ENCODE measurements at regions of chr15 and their contacts with region 1.

Region 1: GRCh38 chr15:34038023-34038870 is 757 bp downstream of the AVEN start:
- DNase-seq: peak; percentile 84
- H3K4me3 ChIP-seq: peak overlapping the region; percentile 81
- H3K27ac ChIP-seq: peak overlapping the region; percentile 58
- H3K4me1 ChIP-seq: peaks cover 21% of the 10 kb centered on the region
- CTCF ChIP-seq: no peak

Region 2: DNA sequence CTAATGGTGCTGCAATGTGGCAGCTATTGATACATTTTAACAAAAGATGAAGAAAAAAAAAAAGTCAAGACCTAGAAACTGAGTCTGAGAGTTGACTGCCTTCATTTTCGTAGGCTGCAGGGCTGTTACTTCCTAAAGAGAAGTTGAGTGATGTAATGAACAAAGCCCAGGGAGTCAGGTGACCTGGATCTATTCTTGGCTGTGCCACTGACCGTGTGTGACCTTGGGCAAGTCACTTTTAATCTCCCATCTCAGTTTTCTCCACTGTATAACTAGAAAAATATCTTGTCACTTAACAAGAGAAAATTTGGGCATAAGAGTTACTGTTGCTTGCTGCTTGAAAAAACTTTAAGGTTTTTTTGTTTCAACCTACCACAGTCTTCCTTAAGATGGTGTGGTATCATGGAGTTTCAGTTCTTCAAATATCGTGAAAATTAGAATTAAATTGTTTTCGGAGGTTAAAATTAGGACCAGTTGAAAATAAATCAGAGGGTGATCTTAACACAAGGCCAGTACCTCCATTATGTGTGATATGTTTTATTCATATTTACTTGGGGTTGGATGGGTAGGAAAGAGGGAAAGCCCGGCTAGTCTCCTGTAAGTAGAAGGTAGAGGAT is 849.5 kb before region 1 on chr15:
- CTCF ChIA-PET with region 1: no interaction called
- POLR2A ChIA-PET with region 1: no interaction called
- intact Hi-C with region 1: loop called (anchors 5 kb)
- DNase-seq: peak; percentile 81
- H3K4me3 ChIP-seq: peak overlapping the region; percentile 49
- H3K27ac ChIP-seq: peak overlapping the region; percentile 81
- H3K4me1 ChIP-seq: peaks cover 46% of the 10 kb centered on the region
- CTCF ChIP-seq: no peak

Region 3: GRCh38 chr15:33888176-33888575 is 150.1 kb before region 1 on chr15:
- CTCF ChIA-PET with region 1: no interaction called
- POLR2A ChIA-PET with region 1: no interaction called
- intact Hi-C with region 1: no loop called
- DNase-seq: no peak
- H3K4me3 ChIP-seq: no peak overlapping the region
- H3K27ac ChIP-seq: no peak overlapping the region
- H3K4me1 ChIP-seq: no peaks in the 10 kb centered on the region
- CTCF ChIP-seq: no peak

Region 4: DNA sequence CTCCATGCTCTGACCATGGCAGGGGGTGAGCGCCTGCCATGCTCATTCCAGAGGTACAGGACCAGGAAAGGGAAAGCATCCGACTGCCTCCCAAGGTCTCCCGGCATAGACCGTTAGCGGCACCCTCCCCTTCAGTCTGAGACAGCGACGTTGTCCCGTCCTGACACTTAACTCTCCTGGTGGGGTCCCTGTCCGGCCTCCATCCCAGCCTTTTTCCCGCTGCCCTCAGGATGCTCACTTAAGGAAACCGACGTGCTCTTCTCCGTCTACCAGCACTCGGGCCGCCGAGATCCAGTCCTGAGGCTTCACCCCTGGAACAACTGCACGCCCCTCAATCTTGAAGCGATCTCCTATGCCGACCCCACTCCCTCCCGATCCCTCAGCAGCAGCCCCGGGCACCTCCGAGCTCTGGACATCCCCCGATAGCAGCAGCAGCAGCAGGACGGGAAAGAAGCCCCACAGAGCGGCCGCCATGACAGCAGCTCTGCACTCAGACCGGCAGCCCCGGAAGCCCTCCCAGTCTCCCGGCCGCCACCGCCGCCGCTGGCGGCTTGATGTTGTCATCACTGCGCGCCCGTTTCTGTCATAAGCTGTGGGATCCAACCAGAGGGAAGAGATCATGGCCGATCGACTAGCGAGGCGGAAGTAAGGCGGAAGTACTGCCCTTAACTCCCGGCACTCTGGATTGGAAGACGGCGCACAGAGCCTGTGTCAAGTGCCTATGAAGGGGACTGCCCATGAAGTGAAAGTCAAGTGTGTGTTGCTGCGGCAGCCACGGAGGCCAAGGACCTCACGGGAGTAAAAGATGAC is 63.3 kb after region 1 on chr15 and contains the starts of genes EMC7 and PGBD4:
- CTCF ChIA-PET with region 1: no interaction called
- POLR2A ChIA-PET with region 1: no interaction called
- intact Hi-C with region 1: loop called (anchors 2 kb)
- DNase-seq: peak; percentile 98
- H3K4me3 ChIP-seq: peak within 1 kb of the TSS; percentile 90
- H3K27ac ChIP-seq: peak within 1 kb of the TSS; percentile 29
- H3K4me1 ChIP-seq: peaks cover 24% of the 10 kb centered on the region
- CTCF ChIP-seq: no peak
- total RNA-seq, gene EMC7: 14.7 and 15.7 TPM in 2 replicates
- total RNA-seq, gene PGBD4: 3.6 and 4.4 TPM in 2 replicates

Region 5: DNA sequence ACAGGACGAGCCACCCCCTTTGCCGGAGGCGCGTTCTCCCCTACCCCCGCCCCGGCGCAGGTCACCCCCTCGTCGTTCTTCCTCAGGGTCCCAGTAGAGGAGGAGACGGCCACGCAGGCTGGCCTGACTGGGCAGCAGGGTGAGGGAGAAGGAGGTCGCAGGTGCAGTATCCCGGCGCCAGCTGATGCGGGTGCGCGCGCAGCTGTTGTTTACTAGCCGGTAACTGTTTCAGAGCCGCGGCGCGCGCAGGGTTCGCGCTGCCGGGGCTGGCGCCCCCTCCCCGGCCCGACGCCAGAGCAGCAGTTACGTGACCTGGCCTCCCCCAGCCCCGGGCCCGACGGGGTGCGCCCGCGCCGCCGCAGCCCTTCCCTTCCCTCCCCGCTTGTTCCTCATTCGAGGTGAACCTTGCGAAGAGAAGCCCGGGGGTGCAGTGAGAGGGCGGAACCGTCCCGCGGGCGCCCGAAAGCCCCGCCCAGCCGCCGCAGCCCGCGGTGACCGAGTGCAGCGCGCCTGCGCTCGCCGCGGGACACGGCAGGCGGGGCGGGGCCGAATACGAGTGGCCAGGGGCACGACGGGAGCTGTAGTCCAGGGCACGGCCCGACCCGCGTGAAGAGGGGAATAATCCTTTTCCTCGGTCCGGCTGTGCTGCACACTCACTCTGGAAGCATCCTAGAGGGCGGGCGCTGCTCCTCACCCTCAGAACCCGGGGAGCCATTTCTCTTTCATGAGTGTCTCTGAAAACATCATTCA is 299.5 kb after region 1 on chr15 and contains the start of gene SLC12A6:
- CTCF ChIA-PET with region 1: no interaction called
- POLR2A ChIA-PET with region 1: interaction called, 3 read pairs
- intact Hi-C with region 1: loop called (anchors 2 kb)
- DNase-seq: peak; percentile 90
- H3K4me3 ChIP-seq: peak within 1 kb of the TSS; percentile 90
- H3K27ac ChIP-seq: peak within 1 kb of the TSS; percentile 65
- H3K4me1 ChIP-seq: peaks cover 49% of the 10 kb centered on the region
- CTCF ChIP-seq: 0 out of 2 replicates have a peak, but pooled peaks have one; percentile 15
- total RNA-seq, gene SLC12A6: 8.9 and 11.5 TPM in 2 replicates

Region 6: GRCh38 chr15:34367101-34368081 is 329.1 kb after region 1 on chr15 and contains the start of gene LPCAT4:
- CTCF ChIA-PET with region 1: no interaction called
- POLR2A ChIA-PET with region 1: interaction called, 3 read pairs
- intact Hi-C with region 1: loop called (anchors 10 kb)
- DNase-seq: peak; percentile 95
- H3K4me3 ChIP-seq: peak within 1 kb of the TSS; percentile 99
- H3K27ac ChIP-seq: peak within 1 kb of the TSS; percentile 90
- H3K4me1 ChIP-seq: peaks cover 18% of the 10 kb centered on the region
- CTCF ChIP-seq: peak; percentile 91
- total RNA-seq, gene LPCAT4: 27.8 and 44.3 TPM in 2 replicates